ENCODE measurements at regions of chr18 and their contacts with region 1.

Region 1: DNA sequence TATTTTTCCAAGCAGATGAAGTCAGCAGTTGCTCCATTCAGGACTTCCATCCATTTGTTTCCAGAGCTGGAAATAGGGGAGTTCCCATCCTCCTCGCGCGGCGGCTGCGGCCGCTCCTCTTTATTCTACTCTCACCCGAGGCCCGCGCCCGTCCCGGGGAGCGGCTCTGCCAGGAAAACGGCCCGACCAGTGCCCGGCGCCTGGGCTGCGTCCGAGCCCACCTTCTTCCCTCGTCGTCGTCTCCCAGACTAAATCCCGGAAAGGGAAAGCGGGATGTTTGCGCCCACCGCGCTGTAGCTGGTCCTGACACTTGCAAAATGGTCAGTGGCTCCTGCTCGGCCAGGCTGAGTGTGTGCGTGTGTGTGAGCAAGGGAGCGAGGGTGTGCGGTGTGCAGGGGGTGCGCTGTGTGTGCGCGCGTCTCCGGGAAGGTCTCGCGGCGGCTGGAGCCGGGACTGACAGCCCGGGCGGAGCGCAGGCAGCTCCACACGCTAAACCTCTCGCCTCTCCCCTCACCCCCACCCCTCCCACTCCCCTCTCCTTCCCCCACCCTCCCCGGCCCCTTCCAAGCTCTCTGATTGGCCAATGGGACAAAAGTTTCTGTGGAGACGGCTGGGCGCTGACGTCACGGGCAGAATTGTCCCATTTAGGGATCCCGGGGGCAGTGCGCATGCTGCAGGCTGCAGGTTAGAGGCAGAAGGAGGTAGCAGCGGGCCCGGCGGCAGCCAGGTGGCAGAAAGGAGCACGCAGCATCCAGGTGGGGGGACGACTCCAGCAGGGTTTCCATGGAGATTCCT is at the start of gene NOL4:
- DNase-seq: peak; percentile 93 to 98
- H3K4me3 ChIP-seq: peak within 1 kb of the TSS; percentile 49 to 73 (median 62)
- H3K27ac ChIP-seq: no peak within 1 kb of the TSS
- H3K4me1 ChIP-seq: peaks cover 3 to 6% (median 4%) of the 10 kb centered on the region in 4 experiments; a peak in 6 of 7 replicates
- H3K27me3 ChIP-seq: peaks cover 8 to 41% (median 26%) of the 10 kb centered on the region in 4 experiments; a peak in 6 of 7 replicates
- CTCF ChIP-seq: peak; percentile 79 to 98 (median 95)
- EP300 ChIP-seq: peak in 1 of 2 experiments; percentile 72; a peak in 1 of 3 replicates
- POLR2A ChIP-seq: no peak
- RAD21 ChIP-seq: peak; percentile 71 to 75
- total RNA-seq, gene NOL4: 1.6 and 2.6 TPM in 2 replicates

Region 2: GRCh38 chr18:34108206-34108605 is 116.4 kb before region 1 on chr18:
- CTCF ChIA-PET with region 1: no interaction called
- POLR2A ChIA-PET with region 1: no interaction called
- DNase-seq: no peak
- H3K4me3 ChIP-seq: no peak overlapping the region
- H3K27ac ChIP-seq: no peak overlapping the region
- H3K4me1 ChIP-seq: no peaks in the 10 kb centered on the region
- H3K27me3 ChIP-seq: no peaks in the 10 kb centered on the region
- CTCF ChIP-seq: no peak
- EP300 ChIP-seq: no peak
- POLR2A ChIP-seq: no peak
- RAD21 ChIP-seq: no peak

Region 3: DNA sequence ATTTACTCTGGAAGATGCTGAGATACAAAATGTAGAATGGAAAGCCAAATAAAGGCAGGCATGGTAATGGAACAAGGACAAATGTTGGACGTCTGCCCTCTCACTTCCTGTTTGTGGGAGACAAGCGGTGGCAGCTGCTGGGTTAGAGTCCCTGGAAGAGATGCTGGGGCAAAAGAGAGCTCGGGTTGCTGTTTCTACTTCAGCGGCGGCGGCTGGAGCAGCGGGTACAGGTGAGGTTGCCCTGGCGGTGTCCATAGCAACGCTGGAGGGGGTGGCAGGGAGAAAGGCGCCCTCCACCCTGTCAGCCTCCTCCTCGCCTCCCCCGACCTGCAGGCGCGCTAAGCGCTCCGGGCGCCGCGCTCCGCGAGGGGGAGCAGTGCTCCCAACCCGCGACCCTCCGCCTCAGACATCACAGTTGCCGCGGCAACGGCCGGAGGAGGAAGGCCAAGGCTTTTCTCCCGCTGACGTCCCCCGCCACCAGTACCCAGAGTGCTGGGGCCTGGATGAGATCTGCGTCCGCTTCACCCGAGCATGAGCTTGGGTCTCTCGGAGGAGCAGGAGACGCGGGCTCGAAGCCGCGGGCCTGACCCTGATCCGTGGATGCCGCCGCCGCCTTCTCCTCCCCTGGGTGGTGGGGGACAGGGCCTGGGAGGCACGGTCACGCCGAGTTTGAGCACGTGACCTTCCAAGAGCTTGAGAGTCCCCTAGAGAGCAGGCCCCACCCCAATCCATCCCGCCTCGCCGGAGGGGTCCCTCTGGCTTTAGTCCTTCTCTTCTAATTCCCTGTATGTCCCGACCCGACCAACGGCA is 65.5 kb before region 1 on chr18:
- CTCF ChIA-PET with region 1: interaction called, 14 read pairs
- POLR2A ChIA-PET with region 1: no interaction called
- DNase-seq: peak; percentile 74 to 85
- H3K4me3 ChIP-seq: peak overlapping the region; percentile 34 to 62 (median 50)
- H3K27ac ChIP-seq: no peak overlapping the region
- H3K4me1 ChIP-seq: peaks cover 0 to 3% (median 1%) of the 10 kb centered on the region in 4 experiments; a peak in 4 of 7 replicates
- H3K27me3 ChIP-seq: peaks cover 0 to 5% (median 0%) of the 10 kb centered on the region in 4 experiments; a peak in 2 of 7 replicates
- CTCF ChIP-seq: peak; percentile 50 to 65 (median 64)
- EP300 ChIP-seq: no peak
- POLR2A ChIP-seq: 0 out of 3 replicates have a peak, but pooled peaks of 1 of the 2 experiments have one; percentile 38
- RAD21 ChIP-seq: peak; percentile 40 to 55; a peak in 3 of 4 replicates

Region 4: DNA sequence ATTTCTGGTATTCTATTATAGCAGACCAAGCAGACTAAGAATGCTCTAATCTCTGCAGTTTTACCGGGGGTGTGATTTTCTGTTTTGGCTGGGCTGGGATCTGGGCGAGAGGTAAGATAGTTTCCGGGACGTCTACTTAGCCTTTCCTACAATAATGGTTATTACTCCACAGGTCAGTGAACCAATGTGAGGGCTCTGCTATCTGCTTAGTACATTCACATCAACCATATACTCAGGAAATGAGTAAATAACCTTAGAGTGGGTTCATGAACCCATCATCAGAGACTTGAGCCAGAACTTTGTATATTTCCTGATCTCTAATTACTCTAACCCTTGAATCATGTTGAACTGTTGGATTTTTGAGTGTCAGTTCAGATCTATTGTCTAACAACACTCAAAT is 90.2 kb after region 1 on chr18:
- CTCF ChIA-PET with region 1: interaction called, 12 read pairs
- POLR2A ChIA-PET with region 1: no interaction called
- DNase-seq: no peak
- H3K4me3 ChIP-seq: no peak overlapping the region
- H3K27ac ChIP-seq: no peak overlapping the region
- H3K4me1 ChIP-seq: no peaks in the 10 kb centered on the region
- H3K27me3 ChIP-seq: no peaks in the 10 kb centered on the region
- CTCF ChIP-seq: no peak
- EP300 ChIP-seq: no peak
- POLR2A ChIP-seq: no peak
- RAD21 ChIP-seq: no peak

Region 5: GRCh38 chr18:34380326-34380725 is 155.7 kb after region 1 on chr18:
- CTCF ChIA-PET with region 1: no interaction called
- POLR2A ChIA-PET with region 1: no interaction called
- DNase-seq: no peak
- H3K4me3 ChIP-seq: no peak overlapping the region
- H3K27ac ChIP-seq: no peak overlapping the region
- H3K4me1 ChIP-seq: no peaks in the 10 kb centered on the region
- H3K27me3 ChIP-seq: no peaks in the 10 kb centered on the region
- CTCF ChIP-seq: no peak
- EP300 ChIP-seq: no peak
- POLR2A ChIP-seq: no peak
- RAD21 ChIP-seq: no peak

Measured in H1 (cell line).